Activated CD4-positive, alpha-beta T cell treated with anti-CD3 and anti-CD28 coated beads, Interleukin-2, amount 10 ng/mL, durations not matched to agents 7 days and 5 days (primary cell): ENCODE measurements at regions of chr6 and their contacts with region 1.

Region 1: DNA sequence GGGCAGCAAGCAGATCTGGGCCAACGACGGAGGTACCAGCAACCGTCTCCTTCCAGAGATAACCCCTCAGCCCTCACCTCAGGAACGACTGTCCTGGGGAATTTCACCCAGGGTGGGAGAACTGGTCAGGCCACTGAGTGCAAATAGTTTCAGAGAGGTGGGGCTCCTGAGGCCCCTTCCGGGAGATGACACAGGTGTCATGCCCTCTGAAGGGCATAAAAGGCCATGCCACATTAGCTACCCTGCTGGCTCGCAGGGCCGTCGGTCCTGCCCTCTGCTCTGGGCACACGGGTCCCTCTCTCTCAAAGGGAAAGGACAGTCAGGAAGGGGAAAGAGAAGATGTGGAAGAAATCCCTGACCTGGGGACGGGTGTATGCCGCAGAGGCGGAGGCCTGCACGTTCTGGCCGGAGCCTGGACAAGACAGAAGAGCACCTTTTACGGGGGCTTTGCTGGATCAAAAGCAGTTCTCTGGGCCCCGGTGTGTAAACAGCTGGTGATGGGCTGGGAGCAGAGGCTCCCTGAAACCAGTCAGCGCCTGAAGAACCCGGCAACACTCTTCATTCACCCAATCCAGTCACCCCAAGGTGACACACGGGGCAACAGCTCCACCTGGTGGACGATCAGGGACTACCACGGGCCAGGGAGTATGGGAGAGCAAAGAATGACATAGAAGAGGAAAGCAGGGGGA is 6.4 kb upstream of the TAF8 start:
- DNase-seq: peak; percentile 96
- H3K4me3 Mint-ChIP-seq: peak overlapping the region; percentile 72
- H3K27ac Mint-ChIP-seq: peak overlapping the region; percentile 89
- H3K4me1 Mint-ChIP-seq: peaks cover 85% of the 10 kb centered on the region
- H3K27me3 Mint-ChIP-seq: no peaks in the 10 kb centered on the region

Region 2: DNA sequence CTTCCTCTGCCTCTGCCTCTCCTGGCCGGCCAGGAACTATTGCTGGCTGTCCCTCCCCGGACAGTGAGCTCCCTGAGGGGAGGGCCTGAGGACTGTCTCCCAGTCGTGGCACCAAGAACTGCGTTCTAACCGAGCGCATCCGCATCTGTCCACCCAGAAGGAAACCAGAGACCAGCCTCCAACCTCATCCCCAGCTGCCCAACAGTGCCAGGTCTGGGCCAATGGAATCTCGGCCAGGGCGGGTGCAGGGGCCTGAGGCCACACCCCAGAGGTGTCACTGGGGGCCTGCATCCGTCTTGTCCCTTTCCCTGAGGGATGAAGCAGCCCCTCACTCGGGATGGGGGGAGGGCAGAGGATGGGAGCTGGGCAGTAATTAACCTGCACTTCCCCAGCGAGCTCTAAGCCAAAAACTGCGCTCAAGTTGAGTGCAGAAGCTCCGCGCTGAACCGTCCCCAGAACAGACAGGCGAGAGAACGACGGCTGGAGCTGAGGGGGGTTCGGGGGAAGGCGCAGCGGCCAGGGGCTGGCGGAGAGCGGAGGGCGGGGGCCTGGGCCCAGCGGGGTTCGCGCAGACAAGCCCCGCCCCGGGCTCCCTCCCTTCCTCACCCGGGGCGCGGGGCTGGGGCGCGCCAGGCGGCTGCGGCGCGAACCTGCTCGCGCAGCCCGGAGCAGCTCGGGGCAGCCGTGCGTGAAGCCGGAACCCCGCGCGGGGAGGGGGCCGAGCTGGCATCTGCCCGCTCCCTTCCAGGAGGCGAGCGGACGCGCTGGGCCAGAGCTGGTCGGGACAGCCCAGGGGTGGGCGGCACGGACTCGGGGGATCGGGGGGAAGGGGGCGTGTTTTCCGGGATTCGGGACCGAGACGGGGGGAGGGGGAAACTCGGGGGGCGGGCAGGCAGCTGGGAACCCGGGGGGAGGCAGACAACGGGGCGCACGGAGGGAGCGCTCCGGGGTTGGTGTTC is 309.9 kb before region 1 on chr6:
- CTCF ChIA-PET with region 1: interaction called, 10 read pairs
- POLR2A ChIA-PET with region 1: no interaction called
- DNase-seq: peak; percentile 67
- H3K4me3 Mint-ChIP-seq: peak overlapping the region; percentile 79
- H3K27ac Mint-ChIP-seq: peak overlapping the region; percentile 84
- H3K4me1 Mint-ChIP-seq: peaks cover 36% of the 10 kb centered on the region
- H3K27me3 Mint-ChIP-seq: no peaks in the 10 kb centered on the region

Region 3: GRCh38 chr6:41846666-41847237 is 197.2 kb before region 1 on chr6:
- CTCF ChIA-PET with region 1: interaction called, 13 read pairs
- POLR2A ChIA-PET with region 1: no interaction called
- DNase-seq: peak; percentile 69
- H3K4me3 Mint-ChIP-seq: no peak overlapping the region
- H3K27ac Mint-ChIP-seq: peak overlapping the region; percentile 16
- H3K4me1 Mint-ChIP-seq: peaks cover 13% of the 10 kb centered on the region
- H3K27me3 Mint-ChIP-seq: no peaks in the 10 kb centered on the region

Region 4: DNA sequence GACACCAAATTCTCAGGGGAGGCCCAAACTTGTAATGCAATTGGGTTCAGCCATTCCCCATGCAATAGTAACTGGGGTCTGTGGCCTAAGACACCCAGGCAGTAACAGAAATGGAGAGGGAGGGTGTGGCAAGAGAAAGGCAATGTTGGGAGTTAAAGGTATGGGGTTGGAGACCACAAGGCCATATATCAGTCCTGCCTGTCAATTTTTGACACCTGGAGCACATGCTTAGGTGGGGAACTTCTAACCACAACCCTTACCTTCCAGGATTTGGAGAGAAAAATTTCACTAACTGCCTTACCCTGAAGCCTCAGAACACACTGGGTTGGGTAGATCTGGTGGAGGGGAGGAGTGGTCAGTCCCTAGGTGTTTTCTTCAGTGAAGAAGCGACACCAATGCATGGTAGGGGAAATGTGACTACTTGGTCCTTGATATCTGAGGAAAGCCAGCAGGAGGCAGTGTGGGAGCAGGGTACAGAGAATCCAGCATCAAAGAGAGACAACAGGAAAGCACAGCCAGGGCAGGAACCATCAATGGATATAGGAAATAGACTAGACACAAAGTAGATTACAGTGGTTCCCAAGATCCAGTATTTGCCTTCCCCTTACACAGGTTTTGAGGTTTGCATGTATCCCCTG is 141.9 kb before region 1 on chr6:
- CTCF ChIA-PET with region 1: interaction called, 15 read pairs
- POLR2A ChIA-PET with region 1: no interaction called
- DNase-seq: peak; percentile 75
- H3K4me3 Mint-ChIP-seq: no peak overlapping the region
- H3K27ac Mint-ChIP-seq: no peak overlapping the region
- H3K4me1 Mint-ChIP-seq: peaks cover 32% of the 10 kb centered on the region
- H3K27me3 Mint-ChIP-seq: no peaks in the 10 kb centered on the region

Region 5: GRCh38 chr6:41936073-41936837 is 107.7 kb before region 1 on chr6:
- CTCF ChIA-PET with region 1: interaction called, 412 read pairs
- POLR2A ChIA-PET with region 1: interaction called, 54 read pairs
- DNase-seq: peak; percentile 95
- H3K4me3 Mint-ChIP-seq: peak overlapping the region; percentile 100
- H3K27ac Mint-ChIP-seq: peak overlapping the region; percentile 97
- H3K4me1 Mint-ChIP-seq: peaks cover 63% of the 10 kb centered on the region
- H3K27me3 Mint-ChIP-seq: no peaks in the 10 kb centered on the region

Region 6: GRCh38 chr6:41984623-41985022 is 59.3 kb before region 1 on chr6:
- CTCF ChIA-PET with region 1: no interaction called
- POLR2A ChIA-PET with region 1: no interaction called
- DNase-seq: no peak
- H3K4me3 Mint-ChIP-seq: no peak overlapping the region
- H3K27ac Mint-ChIP-seq: no peak overlapping the region
- H3K4me1 Mint-ChIP-seq: peaks cover 41% of the 10 kb centered on the region
- H3K27me3 Mint-ChIP-seq: no peaks in the 10 kb centered on the region

Region 7: DNA sequence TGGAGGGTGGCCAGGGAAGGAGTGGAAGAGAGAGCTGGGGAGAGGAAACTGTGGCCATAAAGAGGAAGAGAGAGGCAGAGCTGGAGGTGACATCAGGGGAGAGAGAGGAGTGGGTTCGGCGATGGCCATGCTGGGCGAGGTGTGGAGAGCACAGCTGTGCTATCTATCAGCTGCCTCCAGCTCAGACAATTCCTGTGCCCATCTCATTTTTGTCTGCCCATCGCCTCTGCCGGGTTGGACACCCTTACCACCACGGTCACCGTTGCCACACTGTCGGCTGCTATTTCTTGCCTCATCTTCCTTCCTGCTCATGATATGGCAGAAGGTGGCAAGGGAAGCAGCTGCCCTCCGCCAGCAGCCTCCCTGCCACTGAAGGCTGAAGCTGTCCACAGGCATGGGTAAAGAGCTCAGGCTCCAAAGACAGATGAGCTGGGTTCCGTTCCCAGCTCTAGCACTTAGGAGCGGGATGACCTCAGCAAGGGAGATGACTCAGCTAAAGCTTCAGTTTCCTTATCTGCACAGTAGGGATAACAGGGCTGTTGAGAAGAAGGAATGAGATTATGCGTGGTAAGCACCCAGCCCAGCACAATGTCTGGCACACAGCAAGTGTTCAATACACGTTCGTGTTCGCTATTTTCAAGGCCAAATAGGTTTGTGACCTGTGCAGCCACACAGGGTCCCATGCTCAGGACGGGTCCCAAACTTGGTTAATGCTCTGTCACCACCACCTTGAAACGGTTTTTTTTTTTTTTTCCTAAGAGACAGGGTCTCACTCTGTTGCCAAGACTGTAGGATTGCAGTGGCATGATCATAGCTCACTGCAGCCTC is 15.5 kb before region 1 on chr6:
- CTCF ChIA-PET with region 1: interaction called, 38 read pairs
- POLR2A ChIA-PET with region 1: interaction called, 9 read pairs
- DNase-seq: no peak
- H3K4me3 Mint-ChIP-seq: peak overlapping the region; percentile 52
- H3K27ac Mint-ChIP-seq: peak overlapping the region; percentile 90
- H3K4me1 Mint-ChIP-seq: peaks cover 92% of the 10 kb centered on the region
- H3K27me3 Mint-ChIP-seq: no peaks in the 10 kb centered on the region

Region 8: DNA sequence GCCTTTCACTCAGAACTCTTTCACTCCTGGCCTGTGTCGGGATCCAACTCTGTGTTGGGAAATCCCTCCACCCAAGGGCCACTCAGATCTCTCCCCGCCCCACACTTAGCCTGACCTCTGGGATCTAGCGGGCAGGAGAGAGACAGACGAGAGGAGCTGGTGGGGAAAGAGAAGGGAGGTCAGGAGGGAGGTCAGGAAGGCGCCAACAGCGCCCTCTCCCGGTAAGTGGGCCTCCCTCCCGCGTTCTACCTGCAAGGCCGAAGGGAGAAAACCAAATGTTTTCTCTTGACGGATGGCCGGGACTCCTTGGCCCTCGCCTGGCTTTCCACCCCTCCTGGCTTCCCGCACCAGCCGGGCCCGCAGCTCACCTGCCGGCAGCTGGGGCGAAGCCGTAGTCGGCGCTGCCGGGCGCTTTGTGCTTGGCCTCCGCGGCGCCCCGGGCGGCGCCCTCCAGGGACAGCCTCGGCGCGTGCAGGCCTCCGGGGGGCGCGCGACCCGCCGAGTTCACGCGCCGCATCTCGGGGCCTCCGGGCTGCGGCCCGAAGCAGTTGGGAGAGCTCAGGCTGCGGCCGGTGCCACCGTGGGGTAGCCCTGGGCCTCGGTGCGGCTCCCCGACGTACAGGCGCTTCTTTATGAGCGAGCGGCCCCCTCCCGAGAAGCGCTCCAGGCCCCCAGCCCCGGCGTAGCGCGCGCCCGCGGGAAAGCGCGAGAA is 60.3 kb after region 1 on chr6:
- CTCF ChIA-PET with region 1: interaction called, 13 read pairs
- POLR2A ChIA-PET with region 1: interaction called, 3 read pairs
- DNase-seq: peak; percentile 67
- H3K4me3 Mint-ChIP-seq: peak overlapping the region; percentile 48
- H3K27ac Mint-ChIP-seq: no peak overlapping the region
- H3K4me1 Mint-ChIP-seq: peaks cover 19% of the 10 kb centered on the region
- H3K27me3 Mint-ChIP-seq: peaks cover 10% of the 10 kb centered on the region